Heart right ventricle (tissue), 16 donors: ENCODE measurements at regions of chr2 and their contacts with region 1.

Region 1: GRCh38 chr2:196239622-196240587 is 68.5 kb upstream of the STK17B start:
- DNase-seq: peak; percentile 41 to 73
- ATAC-seq: peak; percentile 81 to 95 (median 90)
- H3K4me3 ChIP-seq: no peak overlapping the region
- H3K27ac ChIP-seq: peak overlapping the region; percentile 1 to 89 (median 68)
- H3K4me1 ChIP-seq: peaks cover 4 to 69% (median 17%) of the 10 kb centered on the region in 9 donors
- H3K27me3 ChIP-seq: no peaks in the 10 kb centered on the region
- CTCF ChIP-seq: peak in 7 of 9 donors; percentile 13 to 48 (median 23)

Region 2: DNA sequence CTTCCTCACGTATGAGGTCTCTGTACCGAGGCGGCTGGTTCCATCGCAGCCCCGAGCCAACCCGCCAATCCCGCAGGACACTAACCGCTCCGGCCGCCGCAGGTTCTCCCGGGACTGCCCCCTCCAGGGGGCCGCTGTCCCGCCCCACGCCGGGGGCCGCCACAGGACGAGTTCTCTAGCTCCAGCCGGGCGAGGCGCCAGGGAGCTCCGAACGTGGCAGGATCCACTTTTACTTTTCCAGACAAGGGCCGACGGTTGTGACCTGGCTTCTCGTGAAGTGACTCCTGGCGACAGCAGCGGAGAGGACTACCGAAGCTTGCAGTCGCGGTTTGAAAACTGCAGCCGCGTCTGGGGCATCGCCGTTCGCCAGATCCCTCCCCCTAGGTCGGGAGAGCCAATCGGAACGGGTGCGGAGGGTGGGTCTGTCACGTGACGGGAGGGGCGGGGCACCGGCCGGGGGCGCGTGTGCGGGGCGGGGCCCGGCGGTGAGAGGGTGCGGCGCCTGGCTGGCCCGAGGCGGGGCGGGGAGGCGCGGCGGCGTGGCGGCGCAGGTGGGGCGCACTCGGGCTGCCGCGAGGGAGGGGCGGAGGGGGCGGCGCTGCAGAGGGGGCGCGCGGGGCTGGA is 68.5 kb before region 1 on chr2 and contains the start of gene STK17B:
- intact Hi-C with region 1: loop called in 1 of 10 experiments (anchors 2 kb)
- DNase-seq: peak; percentile 95 to 96
- ATAC-seq: peak; percentile 96 to 99 (median 97)
- H3K4me3 ChIP-seq: peak within 1 kb of the TSS; percentile 75 to 97 (median 85)
- H3K27ac ChIP-seq: peak within 1 kb of the TSS; percentile 67 to 94 (median 80)
- H3K4me1 ChIP-seq: peaks cover 0 to 43% (median 20%) of the 10 kb centered on the region in 9 donors
- H3K27me3 ChIP-seq: no peaks in the 10 kb centered on the region
- CTCF ChIP-seq: peak in 4 of 9 donors; percentile 8 to 31 (median 12)
- total RNA-seq, gene STK17B: 2.6 to 20.4 (median 4.4) TPM

Region 3: GRCh38 chr2:196200557-196200956 is 39.3 kb before region 1 on chr2:
- intact Hi-C with region 1: loop called in 1 of 10 experiments (anchors 5 kb)
- DNase-seq: no peak
- ATAC-seq: no peak
- H3K4me3 ChIP-seq: no peak overlapping the region
- H3K27ac ChIP-seq: peak overlapping the region in 2 of 10 donors; percentile 8 to 44
- H3K4me1 ChIP-seq: peaks cover 0 to 43% (median 13%) of the 10 kb centered on the region in 9 donors
- H3K27me3 ChIP-seq: no peaks in the 10 kb centered on the region
- CTCF ChIP-seq: no peak